Prostate gland (tissue), 2 donors: ENCODE measurements at regions of chr15 and their contacts with region 1.

Region 1: DNA sequence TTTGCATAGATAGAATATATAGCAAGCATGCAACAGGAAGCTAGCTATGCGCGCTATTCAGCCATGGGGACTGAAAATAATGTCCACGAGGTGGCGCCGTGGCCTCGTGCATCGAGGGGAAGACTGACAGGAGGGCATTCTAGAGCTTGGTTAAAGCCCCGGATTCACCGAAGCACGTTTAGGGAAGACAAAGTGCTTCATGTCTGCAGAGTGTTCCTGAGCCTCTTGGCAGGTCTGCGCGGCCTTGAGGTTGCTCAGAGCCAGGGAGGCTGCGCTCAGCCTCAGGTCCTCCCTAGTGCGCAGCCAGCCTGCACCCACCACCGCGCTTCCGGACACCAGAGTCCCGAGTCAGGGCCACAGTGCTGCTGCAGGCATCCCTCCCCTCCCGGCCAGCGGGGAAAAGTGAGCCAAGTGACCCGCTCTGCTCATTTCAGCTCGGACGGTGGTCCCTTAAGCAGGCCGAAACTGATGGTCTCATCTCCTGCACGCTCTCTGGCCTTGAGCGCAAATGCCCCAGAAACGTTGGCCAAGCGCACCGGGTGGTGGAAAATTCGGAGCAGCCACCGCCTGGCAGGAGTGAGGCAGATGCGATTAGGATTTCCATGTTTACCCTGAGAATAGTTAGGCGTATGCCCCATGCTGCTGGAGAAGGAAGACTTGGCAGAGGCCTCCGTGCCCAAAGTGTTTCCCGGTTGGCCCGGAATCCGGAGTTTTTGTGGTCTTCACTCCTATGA is 24.8 kb downstream of the GABRA5 start:
- DNase-seq: peak; percentile 74
- H3K4me3 ChIP-seq: peak overlapping the region; percentile 19 to 32
- H3K27ac ChIP-seq: peak overlapping the region; percentile 28 to 39
- H3K4me1 ChIP-seq: peaks cover 12% of the 10 kb centered on the region
- H3K27me3 ChIP-seq: no peaks in the 10 kb centered on the region
- CTCF ChIP-seq: peak; percentile 44 to 84 (median 82)
- POLR2A ChIP-seq: no peak

Region 2: DNA sequence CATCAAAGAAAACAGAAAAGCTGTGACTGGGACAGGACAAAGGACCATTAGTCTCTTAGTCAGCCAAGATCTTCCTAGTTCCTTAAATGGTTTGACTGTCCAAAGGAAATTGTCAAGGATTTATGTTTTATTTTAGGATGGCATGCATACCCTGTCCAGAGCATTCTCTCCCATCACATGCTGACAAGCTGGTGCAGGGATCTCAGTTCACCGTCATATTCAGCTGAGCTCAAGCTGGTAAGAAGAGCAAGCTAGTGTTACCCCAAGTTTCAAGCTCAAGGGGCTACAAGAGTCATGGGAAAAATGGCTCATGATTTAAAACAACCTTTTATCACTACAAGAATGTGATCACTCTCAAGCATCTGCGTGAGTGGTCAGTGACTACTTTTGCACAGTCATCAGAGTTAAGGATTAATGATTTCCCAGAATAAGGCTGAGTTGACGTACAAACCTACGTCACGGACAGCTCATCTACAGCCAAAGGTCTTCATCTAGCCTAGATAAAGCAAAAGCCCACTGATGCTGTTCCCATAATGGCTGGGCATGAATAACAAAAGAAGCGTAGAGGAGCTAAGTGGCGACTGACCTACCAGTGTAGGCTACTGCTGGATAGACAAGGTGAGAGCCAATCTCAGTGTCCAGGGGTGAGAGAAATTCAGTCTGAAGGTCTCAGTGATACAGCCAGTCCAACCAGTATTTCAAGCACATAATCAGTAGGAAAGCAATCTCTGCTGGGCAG is 276.3 kb before region 1 on chr15:
- intact Hi-C with region 1: no loop called
- DNase-seq: no peak
- H3K4me3 ChIP-seq: no peak overlapping the region
- H3K27ac ChIP-seq: no peak overlapping the region
- H3K4me1 ChIP-seq: no peaks in the 10 kb centered on the region
- H3K27me3 ChIP-seq: no peaks in the 10 kb centered on the region
- CTCF ChIP-seq: no peak
- POLR2A ChIP-seq: no peak

Region 3: GRCh38 chr15:27218426-27218825 is 326.8 kb after region 1 on chr15:
- intact Hi-C with region 1: no loop called
- DNase-seq: no peak
- H3K4me3 ChIP-seq: no peak overlapping the region
- H3K27ac ChIP-seq: no peak overlapping the region
- H3K4me1 ChIP-seq: no peaks in the 10 kb centered on the region
- H3K27me3 ChIP-seq: no peaks in the 10 kb centered on the region
- CTCF ChIP-seq: no peak
- POLR2A ChIP-seq: no peak

Region 4: DNA sequence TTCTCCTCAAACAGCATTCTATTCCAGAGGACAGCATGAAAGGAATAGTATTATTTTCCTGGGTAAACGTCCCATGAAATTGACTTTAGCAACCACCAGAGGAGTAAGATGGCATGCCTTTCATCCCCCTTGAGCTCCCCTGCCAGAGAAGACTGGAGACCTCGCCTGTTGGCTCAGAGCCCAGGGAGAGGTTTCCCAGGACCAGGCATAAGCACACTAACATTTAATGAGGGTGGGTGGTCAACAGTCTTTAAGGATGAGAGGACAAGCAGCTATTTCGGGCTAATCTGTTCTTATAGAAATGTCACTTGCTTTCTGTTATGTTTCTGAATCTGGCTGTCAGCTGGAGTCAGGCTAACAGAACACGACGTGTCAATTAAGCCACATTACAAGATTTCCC is 469.8 kb after region 1 on chr15:
- intact Hi-C with region 1: loop called (anchors 10 kb)
- DNase-seq: no peak
- H3K4me3 ChIP-seq: no peak overlapping the region
- H3K27ac ChIP-seq: no peak overlapping the region
- H3K4me1 ChIP-seq: no peaks in the 10 kb centered on the region
- H3K27me3 ChIP-seq: no peaks in the 10 kb centered on the region
- CTCF ChIP-seq: no peak
- POLR2A ChIP-seq: no peak